Posterior vena cava (tissue), 2 donors: ENCODE measurements at regions of chr5 and their contacts with region 1.

Region 1: GRCh38 chr5:119022017-119022745 is 33.8 kb upstream of the DTWD2 start:
- DNase-seq: no peak

Region 2: DNA sequence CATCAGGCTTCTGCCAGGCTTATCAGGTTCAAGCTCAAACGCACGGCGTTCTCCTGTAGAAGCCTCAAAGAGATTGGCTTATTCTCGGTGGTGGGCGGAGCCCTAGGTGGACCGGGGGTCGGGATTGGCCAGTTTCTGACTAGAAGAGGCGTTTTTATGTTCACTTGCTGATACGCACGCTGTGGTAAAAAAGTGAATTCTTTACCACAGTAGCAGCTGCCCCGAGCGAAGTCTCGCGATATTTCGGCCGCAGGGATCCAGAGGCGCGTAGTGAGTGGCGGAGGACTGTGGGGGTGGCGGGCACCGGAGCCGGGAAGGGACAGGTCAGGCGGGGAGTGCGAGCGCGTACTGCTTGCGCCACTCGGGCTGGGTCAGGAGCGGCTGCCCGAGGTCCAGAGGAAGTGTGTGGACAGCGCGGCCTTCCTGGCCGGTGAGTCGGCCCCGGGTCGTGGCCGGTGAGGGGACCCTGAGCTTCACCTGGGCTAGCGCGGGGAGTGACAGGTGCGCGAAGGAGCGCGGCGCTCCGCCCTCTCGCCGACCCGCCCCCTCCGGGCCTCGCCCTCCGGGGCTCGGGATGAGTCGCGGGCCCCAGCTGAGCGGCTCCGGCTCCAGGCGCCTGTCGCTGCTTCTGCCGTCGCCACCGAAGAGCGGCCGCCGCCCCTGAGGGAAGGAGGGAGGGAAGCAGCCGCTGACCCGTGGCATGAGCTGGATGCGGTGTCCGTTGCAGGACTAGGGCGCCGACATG is 48.8 kb after region 1 on chr5 and contains the start of gene DMXL1:
- intact Hi-C with region 1: loop called in 1 of 2 experiments (anchors 1 kb)
- DNase-seq: peak; percentile 100
- total RNA-seq, gene DMXL1: 55.6 to 56.0 TPM